ENCODE measurements at regions of chrX and their contacts with region 1.

Region 1: GRCh38 chrX:154490414-154491083 is at the start of gene SLC10A3:
- DNase-seq: peak; percentile 74 to 96
- H3K4me3 ChIP-seq: peak within 1 kb of the TSS; percentile 64 to 94
- H3K27ac ChIP-seq: peak within 1 kb of the TSS; percentile 88 to 97
- H3K4me1 ChIP-seq: peaks cover 0 to 7% of the 10 kb centered on the region in 2 donors
- H3K27me3 ChIP-seq: no peaks in the 10 kb centered on the region
- CTCF ChIP-seq: no peak
- total RNA-seq, gene SLC10A3: 66.2 TPM

Region 2: DNA sequence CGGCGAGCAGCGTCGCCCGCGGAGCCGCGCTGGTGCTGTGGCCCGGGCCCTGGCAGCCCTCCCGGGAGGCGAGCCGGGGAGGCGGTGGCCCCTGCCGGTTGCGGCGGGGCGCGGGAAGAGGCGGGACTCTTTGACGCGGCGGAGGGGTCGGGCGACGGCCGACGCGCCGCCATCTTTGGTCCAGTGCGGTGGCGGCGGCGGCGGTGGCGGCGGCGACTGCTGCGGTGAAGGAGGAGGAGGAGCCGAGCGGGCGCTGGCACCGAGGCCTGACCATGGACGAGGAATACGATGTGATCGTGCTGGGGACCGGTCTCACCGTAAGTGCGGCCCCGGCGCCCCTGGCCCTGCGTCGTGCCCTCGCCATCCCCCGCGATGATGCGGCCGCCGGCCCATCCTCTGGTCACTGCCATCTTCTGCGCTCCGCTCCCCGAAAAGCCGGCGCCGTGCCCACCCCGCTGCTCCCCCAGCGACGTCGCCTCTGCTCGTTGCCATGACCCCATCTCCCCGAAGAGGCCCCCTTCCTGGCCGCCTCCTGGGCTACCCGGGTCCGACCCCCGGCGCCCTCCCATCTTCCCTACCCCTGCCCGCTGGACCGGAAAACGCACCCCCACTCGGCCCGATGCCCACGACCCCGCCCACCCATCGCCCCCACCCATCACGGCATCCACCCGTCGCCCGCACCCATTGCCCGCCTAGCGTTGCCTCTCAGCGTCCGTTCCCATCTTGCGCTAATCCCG is 53.4 kb before region 1 on chrX and contains the start of gene GDI1:
- intact Hi-C with region 1: loop called (anchors 2 kb)
- DNase-seq: no peak
- H3K4me3 ChIP-seq: peak within 1 kb of the TSS; percentile 62 to 90
- H3K27ac ChIP-seq: peak within 1 kb of the TSS; percentile 78 to 96
- H3K4me1 ChIP-seq: peaks cover 3 to 8% of the 10 kb centered on the region in 2 donors
- H3K27me3 ChIP-seq: no peaks in the 10 kb centered on the region
- CTCF ChIP-seq: no peak
- total RNA-seq, gene GDI1: 67.4 TPM

Region 3: GRCh38 chrX:154515878-154516655 is 25.5 kb after region 1 on chrX and contains the start of gene FAM3A:
- intact Hi-C with region 1: loop called (anchors 1 kb)
- DNase-seq: peak; percentile 70 to 95
- H3K4me3 ChIP-seq: peak within 1 kb of the TSS; percentile 64 to 72
- H3K27ac ChIP-seq: peak within 1 kb of the TSS; percentile 82 to 88
- H3K4me1 ChIP-seq: peaks cover 2 to 5% of the 10 kb centered on the region in 2 donors
- H3K27me3 ChIP-seq: no peaks in the 10 kb centered on the region
- CTCF ChIP-seq: no peak
- total RNA-seq, gene FAM3A: 69.9 TPM

Region 4: DNA sequence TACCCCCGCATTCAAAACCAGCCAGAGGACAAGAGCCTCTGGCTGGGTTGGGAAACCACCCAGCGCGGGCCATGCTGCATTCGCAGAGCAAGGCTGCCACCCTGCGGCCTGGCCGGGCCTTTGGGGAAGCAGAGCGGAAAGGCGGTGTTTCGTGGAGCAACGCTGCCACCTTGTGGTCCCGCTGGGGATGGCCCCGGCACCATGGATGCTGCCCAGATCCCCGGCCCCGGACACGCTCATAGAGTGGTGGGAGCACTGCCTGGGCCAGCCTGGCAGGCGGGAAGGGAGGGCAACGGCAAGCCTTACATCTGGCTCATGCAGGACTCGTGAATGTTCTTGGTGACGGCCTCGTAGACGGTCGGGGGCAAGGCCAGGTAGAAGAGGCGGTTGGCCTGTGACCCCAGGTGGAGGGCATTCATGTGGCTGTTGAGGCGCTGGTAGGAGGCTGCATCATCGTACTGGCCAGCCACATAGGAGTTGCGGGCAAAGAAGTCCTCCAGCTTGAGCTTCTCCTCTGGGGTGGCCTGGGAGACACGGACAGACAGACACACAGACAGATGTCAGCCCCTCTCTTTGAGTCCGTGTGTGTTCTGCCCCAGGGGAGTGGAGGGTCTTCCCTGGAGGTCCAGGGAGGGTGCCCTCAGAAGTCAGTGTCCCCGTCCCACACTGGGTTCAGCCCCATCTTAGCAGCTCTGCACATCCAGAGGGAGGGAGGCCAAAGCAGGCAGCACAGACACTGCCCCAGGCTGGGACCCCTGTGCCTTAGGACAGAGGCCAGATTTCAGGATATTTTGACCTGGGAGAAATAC is 44.5 kb after region 1 on chrX:
- intact Hi-C with region 1: loop called (anchors 5 kb)
- DNase-seq: peak in 1 of 2 donors; percentile 92
- H3K4me3 ChIP-seq: no peak overlapping the region
- H3K27ac ChIP-seq: no peak overlapping the region
- H3K4me1 ChIP-seq: peaks cover 0 to 3% of the 10 kb centered on the region in 2 donors
- H3K27me3 ChIP-seq: no peaks in the 10 kb centered on the region
- CTCF ChIP-seq: peak; percentile 96 to 100 (median 99)

Region 5: GRCh38 chrX:154649503-154650470 is 159.2 kb after region 1 on chrX:
- intact Hi-C with region 1: no loop called
- DNase-seq: peak in 1 of 2 donors; percentile 58
- H3K4me3 ChIP-seq: no peak overlapping the region
- H3K27ac ChIP-seq: no peak overlapping the region
- H3K4me1 ChIP-seq: no peaks in the 10 kb centered on the region
- H3K27me3 ChIP-seq: no peaks in the 10 kb centered on the region
- CTCF ChIP-seq: no peak

Measured in ascending aorta (tissue), 2 donors.